ENCODE measurements at regions of chr2 and their contacts with region 1.

Region 1: GRCh38 chr2:156589381-156590079 is 153.4 kb downstream of the GPD2 start:
- DNase-seq: peak in 6 of 9 donors; percentile 18 to 55 (median 42)
- ATAC-seq: peak; percentile 63
- H3K4me3 ChIP-seq: no peak overlapping the region
- H3K4me3 Mint-ChIP-seq: no peak overlapping the region
- H3K27ac ChIP-seq: no peak overlapping the region
- H3K27ac Mint-ChIP-seq: no peak overlapping the region
- H3K4me1 ChIP-seq: no peaks in the 10 kb centered on the region
- H3K4me1 Mint-ChIP-seq: peaks cover 0 to 9% (median 4%) of the 10 kb centered on the region in 7 donors
- H3K27me3 ChIP-seq: no peaks in the 10 kb centered on the region
- H3K27me3 Mint-ChIP-seq: no peaks in the 10 kb centered on the region

Region 2: DNA sequence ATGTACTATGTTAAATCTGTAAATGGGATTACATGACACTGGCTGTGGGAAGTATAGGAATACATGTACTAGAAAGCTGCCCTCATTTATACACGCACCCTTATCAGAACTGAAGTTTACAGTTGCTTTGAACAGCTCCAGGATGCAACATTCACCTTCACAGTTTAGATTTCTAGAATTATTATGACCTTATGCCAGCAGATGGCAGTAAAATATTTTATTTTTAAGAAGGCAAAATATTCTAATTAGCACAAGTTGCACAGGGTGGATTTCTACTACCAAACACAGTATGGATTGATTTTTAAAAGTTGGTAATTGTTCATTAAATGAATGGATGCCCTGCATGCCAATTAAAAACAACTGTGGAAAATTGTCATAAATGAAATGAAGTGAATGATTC is 1220.6 kb before region 1 on chr2:
- CTCF ChIA-PET with region 1: interaction called, 4 read pairs
- POLR2A ChIA-PET with region 1: no interaction called
- intact Hi-C with region 1: loop called (anchors 1 to 5 kb)
- DNase-seq: peak in 2 of 9 donors; percentile 5 to 6
- ATAC-seq: no peak
- H3K4me3 ChIP-seq: no peak overlapping the region
- H3K4me3 Mint-ChIP-seq: no peak overlapping the region
- H3K27ac ChIP-seq: no peak overlapping the region
- H3K27ac Mint-ChIP-seq: no peak overlapping the region
- H3K4me1 ChIP-seq: no peaks in the 10 kb centered on the region
- H3K4me1 Mint-ChIP-seq: no peaks in the 10 kb centered on the region
- H3K27me3 ChIP-seq: no peaks in the 10 kb centered on the region
- H3K27me3 Mint-ChIP-seq: peaks cover 1 to 8% (median 6%) of the 10 kb centered on the region in 5 donors

Region 3: DNA sequence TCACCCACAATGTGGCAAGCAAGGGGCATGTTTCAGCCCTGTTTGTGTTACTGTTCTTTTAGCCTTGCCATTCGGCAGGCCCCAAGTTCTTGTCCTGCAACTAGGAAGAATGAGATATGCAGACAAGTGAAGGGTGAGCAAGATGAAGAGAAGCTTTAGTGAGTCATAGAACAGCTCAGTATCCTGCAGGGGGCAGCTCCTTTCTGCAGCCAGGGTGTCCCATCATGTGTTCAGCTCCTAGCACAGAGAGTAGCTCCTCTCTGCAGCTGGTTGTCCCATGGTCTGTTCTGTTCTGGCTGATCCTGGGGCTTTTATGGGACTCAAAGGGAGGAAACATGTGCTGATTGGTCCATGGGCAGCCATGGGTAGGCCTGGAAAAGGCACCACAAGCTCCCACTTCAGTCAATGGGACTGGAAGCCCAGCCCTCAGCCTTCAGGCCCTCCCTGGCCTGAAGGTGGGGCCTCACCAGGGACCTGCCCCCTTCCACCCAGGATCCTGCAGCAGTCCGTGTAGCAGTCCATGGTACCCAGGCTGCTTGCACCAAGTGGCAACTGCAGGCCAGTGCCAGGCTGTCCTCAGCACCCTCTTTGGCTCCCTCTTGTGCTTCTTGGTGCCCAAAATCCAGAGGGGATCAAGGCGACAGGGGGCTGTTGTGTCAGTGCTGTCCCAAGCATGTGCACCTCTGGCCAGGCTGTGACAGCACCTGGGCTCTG is 583.4 kb before region 1 on chr2:
- CTCF ChIA-PET with region 1: no interaction called
- POLR2A ChIA-PET with region 1: no interaction called
- intact Hi-C with region 1: loop called in 1 of 2 experiments (anchors 10 kb)
- DNase-seq: peak in 1 of 9 donors; percentile 8
- ATAC-seq: peak; percentile 18
- H3K4me3 ChIP-seq: no peak overlapping the region
- H3K4me3 Mint-ChIP-seq: no peak overlapping the region
- H3K27ac ChIP-seq: no peak overlapping the region
- H3K27ac Mint-ChIP-seq: no peak overlapping the region
- H3K4me1 ChIP-seq: no peaks in the 10 kb centered on the region
- H3K4me1 Mint-ChIP-seq: no peaks in the 10 kb centered on the region
- H3K27me3 ChIP-seq: no peaks in the 10 kb centered on the region
- H3K27me3 Mint-ChIP-seq: no peaks in the 10 kb centered on the region

Region 4: GRCh38 chr2:156110890-156111289 is 478.6 kb before region 1 on chr2:
- CTCF ChIA-PET with region 1: no interaction called
- POLR2A ChIA-PET with region 1: no interaction called
- intact Hi-C with region 1: loop called in 1 of 2 experiments (anchors 5 kb)
- DNase-seq: peak in 4 of 9 donors; percentile 2 to 9 (median 5)
- ATAC-seq: peak; percentile 54
- H3K4me3 ChIP-seq: no peak overlapping the region
- H3K4me3 Mint-ChIP-seq: no peak overlapping the region
- H3K27ac ChIP-seq: no peak overlapping the region
- H3K27ac Mint-ChIP-seq: no peak overlapping the region
- H3K4me1 ChIP-seq: no peaks in the 10 kb centered on the region
- H3K4me1 Mint-ChIP-seq: no peaks in the 10 kb centered on the region
- H3K27me3 ChIP-seq: no peaks in the 10 kb centered on the region
- H3K27me3 Mint-ChIP-seq: no peaks in the 10 kb centered on the region

Region 5: GRCh38 chr2:156400706-156401678 is 188.5 kb before region 1 on chr2:
- CTCF ChIA-PET with region 1: no interaction called
- POLR2A ChIA-PET with region 1: no interaction called
- intact Hi-C with region 1: loop called (anchors 1 to 2 kb)
- DNase-seq: peak; percentile 66 to 91 (median 89)
- ATAC-seq: peak; percentile 86
- H3K4me3 ChIP-seq: peak overlapping the region; percentile 100
- H3K4me3 Mint-ChIP-seq: peak overlapping the region; percentile 86 to 96 (median 90)
- H3K27ac ChIP-seq: peak overlapping the region; percentile 95
- H3K27ac Mint-ChIP-seq: peak overlapping the region; percentile 92 to 99 (median 95)
- H3K4me1 ChIP-seq: peaks cover 5 to 6% of the 10 kb centered on the region in 2 donors
- H3K4me1 Mint-ChIP-seq: peaks cover 16 to 39% (median 23%) of the 10 kb centered on the region in 7 donors
- H3K27me3 ChIP-seq: no peaks in the 10 kb centered on the region
- H3K27me3 Mint-ChIP-seq: peaks cover 0 to 6% (median 0%) of the 10 kb centered on the region in 5 donors

Region 6: DNA sequence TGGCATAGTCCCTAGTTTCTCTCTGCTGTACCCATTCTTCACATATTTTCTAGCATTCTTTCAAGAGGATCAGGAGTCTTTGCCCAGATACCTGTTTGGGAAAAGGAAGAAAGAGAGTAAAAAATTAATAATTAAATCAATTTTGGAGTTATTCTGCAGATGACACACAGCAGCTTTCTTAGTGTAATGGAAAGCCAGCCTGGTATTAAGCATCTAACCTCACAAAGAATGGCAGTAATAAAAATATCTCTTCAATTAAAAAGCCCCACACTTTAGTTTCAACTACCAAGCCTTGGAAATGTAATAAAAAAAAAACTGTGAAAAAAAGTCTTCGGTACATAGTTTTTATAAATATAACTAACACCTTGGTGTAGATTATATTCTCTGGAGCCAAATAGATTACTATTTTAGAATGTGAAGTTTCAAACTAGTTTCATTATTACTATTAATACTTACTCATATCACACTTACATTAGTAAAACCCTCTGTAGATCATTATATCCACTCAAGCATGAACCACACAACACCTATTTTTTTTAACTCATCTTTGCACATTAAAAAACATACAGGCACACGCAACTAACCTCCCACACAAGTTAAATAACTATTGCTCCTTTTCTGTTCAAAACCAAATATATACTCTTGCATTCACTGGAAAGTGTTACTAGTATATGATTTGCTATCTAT is 62.4 kb before region 1 on chr2:
- CTCF ChIA-PET with region 1: no interaction called
- POLR2A ChIA-PET with region 1: no interaction called
- intact Hi-C with region 1: no loop called
- DNase-seq: no peak
- ATAC-seq: no peak
- H3K4me3 ChIP-seq: no peak overlapping the region
- H3K4me3 Mint-ChIP-seq: no peak overlapping the region
- H3K27ac ChIP-seq: no peak overlapping the region
- H3K27ac Mint-ChIP-seq: peak overlapping the region in 1 of 9 donors; percentile 6
- H3K4me1 ChIP-seq: peaks cover 0 to 3% of the 10 kb centered on the region in 2 donors
- H3K4me1 Mint-ChIP-seq: no peaks in the 10 kb centered on the region
- H3K27me3 ChIP-seq: no peaks in the 10 kb centered on the region
- H3K27me3 Mint-ChIP-seq: no peaks in the 10 kb centered on the region

Measured in naive thymus-derived CD4-positive, alpha-beta T cell (primary cell).